Activated T-helper 1 cell treated with anti-CD3 and anti-CD28 coated beads, Interleukin-12 subunit alpha, Interleukin-12 subunit beta, Interleukin-2, Interleukin-4 antibody, amounts not matched to agents 30 ng/mL and 10 ng/mL and 1 ng/mL, durations not matched to agents 14 hours and 24 hours and 36 hours (primary cell): ENCODE measurements at regions of chr9 and their contacts with region 1.

Region 1: DNA sequence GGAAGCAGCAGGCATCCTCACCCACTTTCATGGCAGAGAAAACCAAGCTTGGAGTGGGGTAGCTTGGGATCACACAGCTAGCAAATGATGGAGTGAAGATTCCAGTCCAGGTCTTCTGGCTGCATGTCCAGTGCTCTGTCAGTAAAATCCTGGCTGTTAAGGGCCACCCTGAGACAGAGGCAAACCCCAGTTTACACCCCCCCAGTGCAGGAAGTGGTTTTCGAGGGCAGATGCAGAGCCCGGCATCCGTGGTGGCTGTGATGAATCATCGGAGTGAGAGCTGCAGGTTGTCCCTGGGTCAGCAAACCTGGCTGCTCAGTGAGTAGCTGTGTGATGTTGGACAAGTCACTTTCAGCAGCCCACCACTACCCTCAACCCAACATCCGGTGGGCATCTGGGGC is 115.4 kb downstream of the RGS3 start:
- DNase-seq: peak; percentile 83
- H3K4me3 Mint-ChIP-seq: peak overlapping the region; percentile 69
- H3K27ac Mint-ChIP-seq: peak overlapping the region; percentile 91
- H3K4me1 Mint-ChIP-seq: peaks cover 68% of the 10 kb centered on the region
- H3K27me3 Mint-ChIP-seq: no peaks in the 10 kb centered on the region

Region 2: DNA sequence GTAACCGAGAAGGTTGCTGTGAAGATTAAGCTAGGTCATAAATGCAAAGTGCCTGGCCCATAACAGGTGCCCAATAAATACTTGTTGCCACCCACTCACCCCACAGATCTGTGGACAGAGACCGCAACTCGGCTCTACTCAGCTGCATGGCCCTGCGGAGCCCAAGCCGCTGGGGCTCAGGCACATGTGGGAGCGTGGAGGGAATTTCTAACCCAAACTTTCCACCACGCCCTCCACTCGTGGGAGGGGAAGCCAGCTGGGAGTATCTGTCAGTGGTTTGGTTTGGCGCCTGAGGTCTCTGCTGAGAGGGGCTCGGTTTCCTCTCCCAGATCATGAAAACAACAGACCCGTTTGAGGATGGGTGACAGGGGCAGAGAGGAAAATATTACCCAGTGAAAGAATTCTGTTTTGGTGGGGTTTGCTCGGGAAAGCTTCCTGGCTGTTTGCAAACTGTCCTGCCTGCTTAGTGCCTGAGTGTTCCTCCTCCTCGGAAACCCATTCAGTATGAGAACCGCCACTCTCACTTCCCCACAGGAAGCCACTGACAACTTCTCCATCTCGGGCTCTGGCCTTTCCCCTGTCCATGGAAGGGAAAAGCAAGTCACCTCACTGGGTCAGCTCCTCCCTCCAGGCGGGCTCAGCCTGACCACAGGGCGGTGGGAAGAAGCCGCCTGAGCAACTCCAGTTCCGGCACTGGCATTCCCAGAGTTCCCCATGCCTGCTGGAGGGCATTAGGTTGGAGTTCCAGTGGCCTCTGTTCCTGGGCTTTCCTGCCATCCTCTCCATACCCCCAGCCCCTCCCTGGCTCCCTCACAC is 55.3 kb before region 1 on chr9:
- intact Hi-C with region 1: loop called (anchors 1 kb)
- DNase-seq: peak; percentile 54
- H3K4me3 Mint-ChIP-seq: peak overlapping the region; percentile 77
- H3K27ac Mint-ChIP-seq: peak overlapping the region; percentile 86
- H3K4me1 Mint-ChIP-seq: peaks cover 85% of the 10 kb centered on the region
- H3K27me3 Mint-ChIP-seq: peaks cover 2% of the 10 kb centered on the region

Region 3: DNA sequence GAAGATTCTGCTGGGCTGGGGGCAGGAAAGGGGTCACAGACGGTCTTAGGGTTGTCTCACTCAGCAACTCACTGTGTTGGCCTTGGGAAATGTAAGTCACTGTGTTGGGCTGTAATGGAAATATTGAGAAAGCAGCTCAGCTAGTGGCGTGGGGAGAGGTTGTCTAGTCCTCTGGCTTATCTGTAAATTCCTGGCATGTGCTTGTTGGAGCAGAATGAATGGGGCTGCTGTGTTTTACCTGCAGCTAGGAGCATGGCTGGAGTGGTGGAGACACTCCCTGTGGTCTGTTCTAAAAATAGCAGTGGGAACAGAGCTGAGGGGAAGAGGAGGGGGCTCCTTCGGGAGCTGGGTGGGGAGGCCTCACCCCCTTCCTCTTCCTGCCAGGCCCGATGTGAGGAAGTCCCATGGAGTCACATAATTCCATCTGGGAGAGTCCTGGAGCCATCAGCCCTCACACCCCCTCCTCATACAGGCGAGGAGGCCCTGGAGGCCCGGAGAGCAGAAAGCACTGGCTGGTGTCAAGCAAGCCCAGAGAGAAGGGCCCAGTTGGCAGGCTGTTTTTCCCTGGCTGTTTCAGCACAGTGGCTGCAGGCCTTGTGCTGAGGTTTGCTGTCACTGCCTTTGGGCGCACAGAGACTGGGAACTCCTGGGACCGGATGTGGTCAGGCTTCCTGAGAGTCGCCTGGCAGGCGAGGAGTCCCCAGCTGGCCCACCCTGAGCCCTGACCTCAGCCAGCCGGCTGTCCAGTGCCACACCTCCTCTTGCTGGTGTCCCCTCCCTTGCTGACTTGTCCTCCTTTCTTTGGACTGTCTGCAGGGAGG is 30.5 kb before region 1 on chr9:
- intact Hi-C with region 1: loop called (anchors 1 kb)
- DNase-seq: no peak
- H3K4me3 Mint-ChIP-seq: peak overlapping the region; percentile 23
- H3K27ac Mint-ChIP-seq: peak overlapping the region; percentile 92
- H3K4me1 Mint-ChIP-seq: peaks cover 26% of the 10 kb centered on the region
- H3K27me3 Mint-ChIP-seq: no peaks in the 10 kb centered on the region

Region 4: GRCh38 chr9:113556877-113557593 is 21.8 kb before region 1 on chr9:
- intact Hi-C with region 1: loop called (anchors 2 kb)
- DNase-seq: no peak
- H3K4me3 Mint-ChIP-seq: no peak overlapping the region
- H3K27ac Mint-ChIP-seq: peak overlapping the region; percentile 49
- H3K4me1 Mint-ChIP-seq: peaks cover 33% of the 10 kb centered on the region
- H3K27me3 Mint-ChIP-seq: peaks cover 1% of the 10 kb centered on the region

Region 5: GRCh38 chr9:113591001-113591898 is 12.4 kb after region 1 on chr9:
- intact Hi-C with region 1: loop called (anchors 1 kb)
- DNase-seq: peak; percentile 37
- H3K4me3 Mint-ChIP-seq: no peak overlapping the region
- H3K27ac Mint-ChIP-seq: peak overlapping the region; percentile 34
- H3K4me1 Mint-ChIP-seq: peaks cover 53% of the 10 kb centered on the region
- H3K27me3 Mint-ChIP-seq: no peaks in the 10 kb centered on the region

Region 6: DNA sequence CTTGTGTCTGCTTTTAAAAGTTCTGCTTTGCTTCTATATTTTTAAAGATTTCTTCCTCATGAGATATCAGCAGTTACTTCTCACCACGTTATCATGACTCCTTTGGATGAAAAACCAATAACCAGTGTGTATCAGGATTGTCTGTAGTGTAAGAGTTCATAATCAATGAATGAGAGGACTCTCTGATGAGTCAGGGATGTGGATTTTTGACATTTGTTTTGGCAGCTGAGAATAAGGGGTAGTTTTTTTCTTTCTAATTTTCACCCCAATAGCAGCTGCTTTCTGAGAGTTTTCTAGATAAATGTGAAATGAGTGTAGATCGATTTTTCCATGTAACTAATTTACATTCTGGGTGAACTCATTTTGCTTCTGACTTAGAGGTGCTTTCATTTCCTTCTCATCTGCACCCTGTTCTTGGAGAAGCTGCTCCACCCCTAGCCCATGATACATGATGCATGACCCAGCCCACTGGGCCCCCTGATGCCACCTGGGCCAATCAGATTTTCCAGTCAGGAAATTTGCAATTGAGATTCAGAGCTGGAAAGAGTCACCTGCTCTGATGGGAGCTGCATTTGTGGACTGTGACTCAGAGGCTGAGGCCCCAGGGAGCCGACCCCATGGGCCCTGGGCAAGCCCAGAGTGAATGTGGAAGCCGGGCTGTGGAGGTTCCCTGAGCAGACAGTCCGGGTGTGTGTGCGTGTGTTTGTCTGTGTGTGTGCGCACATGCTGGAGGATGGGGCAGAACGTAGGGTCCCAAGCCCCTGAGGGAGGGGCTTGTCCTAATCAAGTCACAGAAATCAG is 43.9 kb after region 1 on chr9:
- intact Hi-C with region 1: loop called (anchors 1 kb)
- DNase-seq: peak; percentile 18
- H3K4me3 Mint-ChIP-seq: peak overlapping the region; percentile 43
- H3K27ac Mint-ChIP-seq: peak overlapping the region; percentile 93
- H3K4me1 Mint-ChIP-seq: peaks cover 47% of the 10 kb centered on the region
- H3K27me3 Mint-ChIP-seq: peaks cover 2% of the 10 kb centered on the region

Region 7: DNA sequence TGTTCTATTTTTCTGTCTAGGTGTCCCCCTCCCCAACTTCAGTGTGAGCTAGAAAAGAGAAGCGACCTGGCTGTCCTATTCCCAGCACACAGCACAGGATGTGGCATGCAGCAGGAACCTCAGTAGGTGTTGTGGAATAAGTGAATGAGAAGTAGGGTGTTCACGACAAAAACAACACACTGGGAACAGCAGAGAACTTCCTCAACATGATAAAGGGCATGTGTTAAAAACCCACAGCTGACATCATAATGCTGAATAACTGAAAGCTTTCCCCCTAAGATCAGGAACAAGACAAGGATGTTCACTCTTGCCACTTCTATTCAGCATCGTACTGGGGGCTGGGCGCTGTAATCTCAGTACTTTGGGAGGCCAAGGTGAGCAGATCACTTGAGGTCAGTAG is 141.6 kb after region 1 on chr9:
- intact Hi-C with region 1: no loop called
- DNase-seq: no peak
- H3K4me3 Mint-ChIP-seq: no peak overlapping the region
- H3K27ac Mint-ChIP-seq: no peak overlapping the region
- H3K4me1 Mint-ChIP-seq: no peaks in the 10 kb centered on the region
- H3K27me3 Mint-ChIP-seq: no peaks in the 10 kb centered on the region